ENCODE measurements at regions of chr9 and their contacts with region 1.

Region 1: GRCh38 chr9:13674926-13675637 is 395.6 kb upstream of the MPDZ start:
- DNase-seq: no peak
- H3K4me3 Mint-ChIP-seq: no peak overlapping the region
- H3K27ac Mint-ChIP-seq: no peak overlapping the region
- H3K4me1 Mint-ChIP-seq: peaks cover 13% of the 10 kb centered on the region
- H3K27me3 Mint-ChIP-seq: no peaks in the 10 kb centered on the region
- CTCF ChIP-seq: no peak

Region 2: DNA sequence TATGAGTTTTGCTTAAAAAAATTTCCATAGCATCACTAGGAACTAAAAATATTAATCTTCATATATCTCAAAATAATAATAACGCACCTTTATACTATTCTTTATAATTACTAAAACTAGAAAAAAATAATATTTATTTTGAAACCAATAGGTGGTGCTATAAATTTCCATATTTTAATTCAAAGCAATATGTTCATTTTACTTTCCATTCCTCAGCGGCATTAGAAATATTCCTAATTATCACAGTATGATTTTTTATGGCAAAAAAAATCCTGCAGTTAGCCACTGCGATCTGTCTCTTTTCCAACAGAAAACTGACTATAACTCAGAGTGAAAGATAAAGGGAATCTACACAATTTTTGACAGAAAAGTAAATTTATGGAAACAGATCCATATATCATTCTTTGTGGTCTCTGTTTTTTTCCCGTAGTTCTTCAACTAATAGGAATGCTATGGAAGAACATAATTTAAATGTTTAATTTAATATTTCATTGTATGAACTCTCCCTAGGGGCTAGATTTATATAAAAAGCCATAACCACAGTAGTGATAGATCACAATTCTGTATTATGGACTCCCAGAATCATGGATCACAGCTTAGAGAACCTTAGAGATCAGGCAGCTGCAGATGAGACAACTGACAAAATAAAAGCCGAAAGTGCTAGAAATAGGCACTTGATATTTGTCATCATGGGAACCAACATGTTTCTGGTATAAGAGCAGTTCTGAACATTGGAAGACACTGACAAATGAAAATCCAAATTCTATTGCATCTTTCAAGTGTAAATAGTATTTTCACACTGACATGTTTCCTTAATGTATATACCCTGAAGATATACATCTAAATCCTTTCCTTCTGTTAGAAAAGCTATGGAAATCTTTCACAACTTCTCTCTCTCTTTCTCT is 227.9 kb before region 1 on chr9:
- CTCF ChIA-PET with region 1: no interaction called
- intact Hi-C with region 1: loop called (anchors 10 kb)
- DNase-seq: no peak
- H3K4me3 Mint-ChIP-seq: no peak overlapping the region
- H3K27ac Mint-ChIP-seq: no peak overlapping the region
- H3K4me1 Mint-ChIP-seq: peaks cover 9% of the 10 kb centered on the region
- H3K27me3 Mint-ChIP-seq: no peaks in the 10 kb centered on the region
- CTCF ChIP-seq: no peak

Region 3: DNA sequence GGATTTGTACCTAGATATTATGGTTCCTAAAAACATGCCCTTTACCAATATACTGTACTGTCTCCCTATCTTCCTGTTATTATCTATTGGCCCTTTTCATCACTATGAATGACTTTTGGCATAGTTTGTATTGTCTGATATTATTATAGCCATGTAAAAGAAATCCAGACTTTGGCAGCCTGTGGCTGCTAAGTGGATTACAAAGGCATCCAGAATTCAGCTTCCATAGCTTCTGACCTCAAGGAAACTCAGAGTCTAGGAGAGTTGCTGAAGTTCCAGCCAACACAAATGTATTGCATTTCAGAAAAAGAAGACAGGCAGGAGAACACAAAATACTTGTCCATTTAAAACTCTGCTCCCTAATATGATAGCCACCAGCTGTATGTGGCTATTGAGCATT is 76.3 kb before region 1 on chr9:
- CTCF ChIA-PET with region 1: no interaction called
- intact Hi-C with region 1: no loop called
- DNase-seq: no peak
- H3K4me3 Mint-ChIP-seq: no peak overlapping the region
- H3K27ac Mint-ChIP-seq: no peak overlapping the region
- H3K4me1 Mint-ChIP-seq: no peaks in the 10 kb centered on the region
- H3K27me3 Mint-ChIP-seq: no peaks in the 10 kb centered on the region
- CTCF ChIP-seq: no peak

Region 4: GRCh38 chr9:14056316-14056861 is 381.3 kb after region 1 on chr9:
- CTCF ChIA-PET with region 1: no interaction called
- intact Hi-C with region 1: no loop called
- DNase-seq: no peak
- H3K4me3 Mint-ChIP-seq: no peak overlapping the region
- H3K27ac Mint-ChIP-seq: no peak overlapping the region
- H3K4me1 Mint-ChIP-seq: no peaks in the 10 kb centered on the region
- H3K27me3 Mint-ChIP-seq: no peaks in the 10 kb centered on the region
- CTCF ChIP-seq: no peak